ENCODE measurements at regions of chr9 and their contacts with region 1.

Region 1: DNA sequence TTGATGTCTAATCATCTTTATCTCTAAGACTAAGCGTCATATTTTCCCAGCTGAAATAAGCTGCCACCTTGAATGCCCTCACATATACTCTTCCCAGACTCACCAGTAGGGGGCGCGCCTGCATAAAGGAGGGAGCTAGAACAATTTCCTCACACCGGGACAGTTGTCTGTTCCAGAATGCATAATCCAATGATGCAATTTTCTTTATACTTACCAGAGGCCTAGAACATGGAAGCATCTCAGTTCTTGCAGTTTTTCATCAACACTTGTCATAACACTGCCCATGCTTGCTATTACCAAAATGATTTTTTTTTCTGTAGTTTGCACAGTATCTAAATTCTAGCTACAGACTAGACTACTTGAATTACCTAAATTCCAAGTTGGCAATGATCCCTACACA is 203.9 kb downstream of the FRMD3 start:
- DNase-seq: peak; percentile 53
- H3K4me3 ChIP-seq: peak overlapping the region in 1 of 2 experiments; percentile 27; a peak in 1 of 4 replicates
- H3K27ac ChIP-seq: peak overlapping the region in 1 of 2 experiments; percentile 8; a peak in 2 of 4 replicates
- H3K4me1 ChIP-seq: no peaks in the 10 kb centered on the region; a peak in 2 of 4 replicates
- H3K27me3 ChIP-seq: no peaks in the 10 kb centered on the region
- CTCF ChIP-seq: peak; percentile 97
- EP300 ChIP-seq: no peak; a peak in 1 of 4 replicates
- RAD21 ChIP-seq: peak; percentile 99

Region 2: GRCh38 chr9:83130541-83130940 is 203.8 kb before region 1 on chr9:
- CTCF ChIA-PET with region 1: no interaction called
- POLR2A ChIA-PET with region 1: no interaction called
- DNase-seq: no peak
- H3K4me3 ChIP-seq: no peak overlapping the region
- H3K27ac ChIP-seq: no peak overlapping the region
- H3K4me1 ChIP-seq: no peaks in the 10 kb centered on the region
- H3K27me3 ChIP-seq: no peaks in the 10 kb centered on the region
- CTCF ChIP-seq: no peak
- EP300 ChIP-seq: no peak
- RAD21 ChIP-seq: no peak

Region 3: DNA sequence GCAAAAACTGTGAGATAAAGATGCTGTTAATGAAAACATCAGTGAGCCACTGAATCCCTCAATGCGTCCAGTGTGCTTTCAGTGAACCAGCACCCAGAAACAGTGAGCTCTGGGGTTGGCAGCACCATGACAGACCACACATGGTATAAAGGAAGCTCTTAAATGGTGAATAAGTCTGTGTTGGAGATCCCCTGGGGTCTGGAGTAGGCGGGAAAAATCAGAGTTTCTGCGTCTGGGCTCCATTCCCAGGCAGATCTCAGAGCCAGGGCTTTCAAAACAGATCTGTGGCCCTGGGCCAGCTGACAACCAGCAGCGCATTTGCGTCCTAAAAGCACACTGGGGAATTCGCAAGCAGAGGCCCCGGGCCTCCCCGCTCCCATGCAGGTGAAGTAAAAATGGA is 29.6 kb before region 1 on chr9:
- CTCF ChIA-PET with region 1: interaction called, 13 read pairs
- POLR2A ChIA-PET with region 1: no interaction called
- DNase-seq: peak; percentile 77
- H3K4me3 ChIP-seq: no peak overlapping the region; a peak in 1 of 4 replicates
- H3K27ac ChIP-seq: peak overlapping the region; percentile 57 to 98
- H3K4me1 ChIP-seq: peaks cover 26 to 39% of the 10 kb centered on the region in 2 experiments
- H3K27me3 ChIP-seq: no peaks in the 10 kb centered on the region
- CTCF ChIP-seq: no peak
- EP300 ChIP-seq: peak in 1 of 2 experiments; percentile 71; a peak in 2 of 4 replicates
- RAD21 ChIP-seq: no peak; the same call in 1 of the 2 replicates

Region 4: GRCh38 chr9:83392228-83392627 is 57.9 kb after region 1 on chr9:
- CTCF ChIA-PET with region 1: interaction called, 10 read pairs
- POLR2A ChIA-PET with region 1: no interaction called
- DNase-seq: no peak
- H3K4me3 ChIP-seq: no peak overlapping the region
- H3K27ac ChIP-seq: no peak overlapping the region
- H3K4me1 ChIP-seq: peaks cover 0 to 17% of the 10 kb centered on the region in 2 experiments; a peak in 1 of 4 replicates
- H3K27me3 ChIP-seq: no peaks in the 10 kb centered on the region
- CTCF ChIP-seq: no peak
- EP300 ChIP-seq: no peak
- RAD21 ChIP-seq: no peak

Region 5: DNA sequence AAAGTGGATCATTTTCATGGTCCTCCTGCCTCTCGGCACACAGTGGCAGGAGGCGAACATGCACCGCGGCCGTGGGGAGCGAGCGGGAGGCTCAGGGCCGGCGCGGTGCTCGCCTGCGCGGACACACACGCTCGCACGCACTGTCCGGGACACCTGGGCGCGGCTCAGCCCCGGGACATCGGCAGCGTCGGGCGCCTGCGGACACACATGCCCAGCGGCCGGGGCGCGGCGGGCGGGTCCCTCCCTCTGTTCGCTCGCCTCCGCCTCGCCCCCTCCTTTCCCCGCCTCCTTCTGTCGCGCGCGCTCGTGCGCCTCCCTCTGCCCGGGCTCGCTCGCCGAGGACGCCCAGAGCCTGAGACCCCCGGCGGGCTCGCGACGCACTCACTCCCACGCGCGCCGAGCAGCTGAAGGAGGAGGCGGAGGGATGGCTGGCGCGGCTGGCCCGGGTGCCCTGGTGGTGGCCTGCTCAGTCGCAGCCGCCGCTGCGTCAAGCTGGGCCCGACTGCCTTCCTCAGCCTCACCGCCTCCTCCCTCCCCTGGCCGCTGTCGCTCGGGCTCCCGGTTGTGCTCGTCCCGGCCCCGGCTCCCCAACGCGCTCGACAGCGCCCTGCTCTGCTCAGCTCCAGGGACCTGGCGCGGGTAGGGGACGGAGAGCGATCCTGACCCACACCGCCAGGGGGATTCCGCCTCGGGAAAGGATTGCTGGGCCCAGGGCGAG is 204.0 kb after region 1 on chr9 and contains the start of gene FRMD3:
- CTCF ChIA-PET with region 1: interaction called, 111 read pairs
- POLR2A ChIA-PET with region 1: interaction called, 4 read pairs
- DNase-seq: peak; percentile 91
- H3K4me3 ChIP-seq: peak within 1 kb of the TSS; percentile 74 to 79
- H3K27ac ChIP-seq: peak within 1 kb of the TSS; percentile 40 to 80; a peak in 3 of 4 replicates
- H3K4me1 ChIP-seq: peaks cover 0 to 23% of the 10 kb centered on the region in 2 experiments; a peak in 1 of 4 replicates
- H3K27me3 ChIP-seq: no peaks in the 10 kb centered on the region
- CTCF ChIP-seq: peak; percentile 70
- EP300 ChIP-seq: no peak
- RAD21 ChIP-seq: peak; percentile 68
- polyA plus RNA-seq, gene FRMD3: 0.89 and 1.3 TPM in 2 replicates

Region 6: DNA sequence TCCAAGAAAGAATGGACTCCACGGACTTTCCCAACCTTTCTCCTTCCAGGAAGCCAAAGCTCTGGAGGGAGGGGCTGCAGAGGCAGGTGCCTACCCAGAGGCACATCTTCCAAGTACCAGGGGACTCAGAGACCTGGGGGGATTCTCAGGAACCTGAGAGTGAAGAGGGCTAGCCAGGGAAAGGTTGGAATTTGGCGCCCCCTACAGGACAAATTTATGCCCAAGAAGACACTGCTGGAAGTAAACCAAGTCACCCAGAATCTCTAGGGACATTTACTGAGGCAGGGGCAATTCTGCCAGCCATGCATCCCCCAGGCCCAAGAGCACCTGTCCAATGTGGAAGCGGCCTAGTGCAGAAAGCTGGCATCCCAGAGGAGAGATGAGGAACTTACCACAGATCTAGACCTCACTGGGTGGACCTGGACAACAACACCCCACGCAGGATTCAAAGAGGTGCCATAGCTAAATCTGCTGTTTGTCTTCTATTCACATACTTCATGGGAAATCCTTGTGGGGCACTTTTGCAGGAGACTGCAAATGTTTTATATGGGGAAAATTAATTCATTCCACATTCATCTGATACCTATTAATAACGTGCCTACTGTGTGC is 262.7 kb after region 1 on chr9:
- CTCF ChIA-PET with region 1: interaction called, 11 read pairs
- POLR2A ChIA-PET with region 1: no interaction called
- DNase-seq: peak; percentile 54
- H3K4me3 ChIP-seq: no peak overlapping the region; a peak in 1 of 4 replicates
- H3K27ac ChIP-seq: no peak overlapping the region
- H3K4me1 ChIP-seq: no peaks in the 10 kb centered on the region; a peak in 1 of 4 replicates
- H3K27me3 ChIP-seq: no peaks in the 10 kb centered on the region
- CTCF ChIP-seq: peak; percentile 74
- EP300 ChIP-seq: no peak
- RAD21 ChIP-seq: peak; percentile 71